ENCODE measurements at regions of chr21 and their contacts with region 1.

Region 1: DNA sequence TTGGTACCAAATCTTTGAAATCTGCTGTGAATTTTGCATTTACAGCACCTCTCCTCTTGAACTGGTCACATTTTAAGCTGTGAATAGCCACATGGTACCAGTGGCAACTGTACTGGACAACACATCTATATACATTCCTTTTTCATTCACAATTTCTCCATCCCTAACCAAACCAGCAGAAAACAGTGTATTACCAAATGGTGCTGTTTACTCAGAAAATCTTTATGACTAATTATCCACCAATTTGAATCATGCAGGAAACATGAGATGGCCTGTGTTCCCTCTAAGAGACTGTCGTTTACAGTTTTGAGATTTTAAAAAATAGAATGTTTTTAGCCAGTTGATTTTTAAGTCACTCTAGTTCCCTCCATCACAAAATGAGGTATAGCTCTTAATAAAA is 17.6 kb upstream of the CCT8 start:
- DNase-seq: no peak
- ATAC-seq: no peak
- H3K4me3 ChIP-seq: no peak overlapping the region
- H3K27ac ChIP-seq: no peak overlapping the region
- H3K4me1 ChIP-seq: peaks cover 0 to 2% of the 10 kb centered on the region in 2 donors
- H3K27me3 ChIP-seq: no peaks in the 10 kb centered on the region

Region 2: DNA sequence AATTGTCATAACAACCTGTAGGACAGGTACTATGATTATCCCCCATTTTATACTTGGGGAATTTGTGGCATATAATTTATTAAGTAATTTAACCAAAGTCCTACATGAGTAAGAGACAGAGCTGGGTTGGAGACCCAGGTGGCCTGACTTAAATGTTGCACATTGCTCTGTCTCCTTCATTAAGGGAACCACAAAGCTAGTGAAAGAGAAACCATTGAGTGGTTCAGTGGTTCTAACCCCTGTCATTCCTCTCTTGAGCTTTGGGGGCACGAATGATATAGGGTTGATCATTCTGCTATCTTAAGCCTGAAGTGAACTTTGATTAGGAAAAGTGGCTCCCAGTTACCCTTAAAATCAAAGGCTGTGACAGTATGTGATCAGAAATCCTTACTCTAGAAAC is 34.2 kb after region 1 on chr21:
- intact Hi-C with region 1: loop called in 1 of 2 experiments (anchors 2 kb)
- DNase-seq: no peak
- ATAC-seq: no peak
- H3K4me3 ChIP-seq: no peak overlapping the region
- H3K27ac ChIP-seq: no peak overlapping the region
- H3K4me1 ChIP-seq: no peaks in the 10 kb centered on the region
- H3K27me3 ChIP-seq: no peaks in the 10 kb centered on the region

Region 3: DNA sequence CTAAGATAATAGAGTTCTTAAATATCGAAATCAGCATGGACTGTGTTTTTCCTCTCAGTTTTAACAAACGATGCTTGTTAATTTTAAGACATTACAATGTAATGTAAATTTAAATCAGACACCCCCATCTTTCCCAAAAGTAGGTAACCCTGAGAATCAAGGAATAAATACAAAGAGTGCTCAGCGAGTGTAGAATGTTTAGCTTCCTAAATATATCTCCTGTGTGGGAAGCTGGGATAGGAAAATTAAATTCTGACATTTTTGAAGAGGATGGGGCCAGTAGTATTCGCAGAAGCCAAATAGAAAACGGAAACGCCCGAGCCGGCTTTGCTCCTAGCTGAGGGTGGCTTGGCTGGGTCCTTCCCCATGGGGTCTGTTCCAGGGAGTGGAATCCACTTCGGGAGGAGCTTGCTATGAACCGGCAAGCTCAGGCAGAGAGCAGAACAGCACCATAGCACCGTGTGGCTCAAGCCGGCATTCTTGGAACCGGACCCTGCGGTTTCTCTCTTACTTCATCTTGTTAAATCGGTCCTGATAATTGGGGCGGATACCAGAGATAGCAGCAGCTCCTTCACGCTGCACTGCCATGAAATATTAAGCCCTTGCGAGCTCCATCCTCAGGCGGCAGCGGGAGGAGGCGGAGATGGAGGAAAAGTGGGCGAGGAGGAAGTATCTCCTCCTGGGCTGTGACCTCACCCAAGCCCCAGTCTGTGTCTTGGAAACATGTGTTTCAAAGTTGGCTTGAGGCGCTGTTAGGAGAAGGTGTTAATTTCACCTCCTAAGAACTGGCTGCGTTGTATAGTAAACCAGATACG is 64.3 kb after region 1 on chr21:
- intact Hi-C with region 1: loop called (anchors 5 kb)
- DNase-seq: peak; percentile 81 to 84
- ATAC-seq: peak; percentile 85
- H3K4me3 ChIP-seq: peak overlapping the region; percentile 8 to 32
- H3K27ac ChIP-seq: peak overlapping the region in 1 of 2 donors; percentile 61
- H3K4me1 ChIP-seq: peaks cover 2 to 3% of the 10 kb centered on the region in 2 donors
- H3K27me3 ChIP-seq: no peaks in the 10 kb centered on the region

Region 4: GRCh38 chr21:29245104-29245643 is 154.1 kb after region 1 on chr21:
- intact Hi-C with region 1: no loop called
- DNase-seq: no peak
- ATAC-seq: no peak
- H3K4me3 ChIP-seq: no peak overlapping the region
- H3K27ac ChIP-seq: no peak overlapping the region
- H3K4me1 ChIP-seq: no peaks in the 10 kb centered on the region
- H3K27me3 ChIP-seq: no peaks in the 10 kb centered on the region

Region 5: GRCh38 chr21:29298348-29299045 is 207.5 kb after region 1 on chr21 and contains the start of gene BACH1:
- intact Hi-C with region 1: loop called in 1 of 2 experiments (anchors 5 kb)
- DNase-seq: peak; percentile 95 to 97
- ATAC-seq: peak; percentile 96
- H3K4me3 ChIP-seq: peak within 1 kb of the TSS; percentile 70 to 88
- H3K27ac ChIP-seq: peak within 1 kb of the TSS; percentile 59 to 71
- H3K4me1 ChIP-seq: peaks cover 6 to 12% of the 10 kb centered on the region in 2 donors
- H3K27me3 ChIP-seq: no peaks in the 10 kb centered on the region
- total RNA-seq, gene BACH1: 90.1 to 103 TPM

Region 6: GRCh38 chr21:29849735-29850176 is 758.7 kb after region 1 on chr21:
- intact Hi-C with region 1: loop called (anchors 10 kb)
- DNase-seq: peak in 1 of 2 donors; percentile 50
- ATAC-seq: peak; percentile 83
- H3K4me3 ChIP-seq: no peak overlapping the region
- H3K27ac ChIP-seq: no peak overlapping the region
- H3K4me1 ChIP-seq: no peaks in the 10 kb centered on the region
- H3K27me3 ChIP-seq: no peaks in the 10 kb centered on the region